K562 (cell line): ENCODE measurements at regions of chr16 and their contacts with region 1.

Region 1: DNA sequence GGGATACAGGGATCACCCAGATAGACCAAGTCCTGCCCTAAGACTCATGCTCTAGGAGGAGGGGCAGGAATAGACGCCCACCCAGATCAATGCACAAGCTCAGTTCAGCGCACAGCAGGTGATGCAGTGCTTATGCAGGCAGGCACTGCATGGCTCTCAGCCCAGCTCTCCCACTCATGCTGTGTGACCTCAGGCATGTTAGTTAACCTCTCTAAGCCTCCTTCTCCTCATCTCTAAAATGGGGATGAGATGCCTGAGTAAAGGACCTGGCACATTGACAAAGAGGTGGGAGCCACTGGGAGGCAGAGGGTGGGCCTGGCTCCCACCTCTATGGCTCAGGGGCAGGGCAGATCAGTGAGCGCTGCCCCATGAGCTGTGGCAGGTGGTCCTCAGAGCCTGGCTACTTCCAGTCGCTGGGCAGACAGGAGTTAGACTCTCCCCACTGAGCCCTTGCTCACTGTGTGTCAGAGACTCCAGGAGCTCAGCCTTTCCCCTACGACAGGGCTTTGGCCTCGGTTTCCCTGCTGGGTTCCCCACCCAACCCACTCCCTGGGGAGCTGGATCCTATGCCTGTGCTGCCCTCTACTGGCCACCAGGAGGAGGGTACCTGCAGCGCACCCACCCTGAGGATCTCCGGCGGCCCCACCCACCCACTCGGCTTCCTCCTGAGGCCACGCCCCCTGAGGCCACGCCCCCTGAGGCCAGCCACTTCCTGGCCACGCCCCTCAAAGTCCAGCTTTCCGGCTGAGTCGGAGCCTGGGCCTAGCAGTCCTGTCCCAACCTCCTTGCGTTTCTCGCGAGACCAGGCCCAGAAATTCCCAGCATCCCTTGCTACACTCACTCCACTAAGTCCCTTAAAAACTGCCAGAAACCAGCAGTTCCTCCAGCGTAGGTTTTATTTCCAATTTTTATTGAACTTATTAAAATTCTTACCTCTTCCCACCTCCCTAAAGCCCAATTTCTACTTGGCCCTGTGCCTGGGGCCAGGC is 196.1 kb downstream of the GSG1L start:
- DNase-seq: peak; percentile 93 to 99 (median 98)
- ATAC-seq: peak; percentile 100
- H3K4me3 ChIP-seq: no peak overlapping the region
- H3K27ac ChIP-seq: peak overlapping the region; percentile 59; the same call in 2 of the 3 replicates
- H3K4me1 ChIP-seq: peaks cover 0 to 2% of the 10 kb centered on the region in 2 experiments; a peak in 1 of 5 replicates
- H3K27me3 ChIP-seq: 0 out of 5 replicates have a peak, but pooled peaks cover 0 to 3% of the 10 kb centered on the region in 2 experiments
- CTCF ChIP-seq: peak; percentile 70 to 89 (median 79)
- EP300 ChIP-seq: no peak
- POLR2A ChIP-seq: no peak
- RAD21 ChIP-seq: peak; percentile 12 to 75; a peak in 2 of 4 replicates

Region 2: DNA sequence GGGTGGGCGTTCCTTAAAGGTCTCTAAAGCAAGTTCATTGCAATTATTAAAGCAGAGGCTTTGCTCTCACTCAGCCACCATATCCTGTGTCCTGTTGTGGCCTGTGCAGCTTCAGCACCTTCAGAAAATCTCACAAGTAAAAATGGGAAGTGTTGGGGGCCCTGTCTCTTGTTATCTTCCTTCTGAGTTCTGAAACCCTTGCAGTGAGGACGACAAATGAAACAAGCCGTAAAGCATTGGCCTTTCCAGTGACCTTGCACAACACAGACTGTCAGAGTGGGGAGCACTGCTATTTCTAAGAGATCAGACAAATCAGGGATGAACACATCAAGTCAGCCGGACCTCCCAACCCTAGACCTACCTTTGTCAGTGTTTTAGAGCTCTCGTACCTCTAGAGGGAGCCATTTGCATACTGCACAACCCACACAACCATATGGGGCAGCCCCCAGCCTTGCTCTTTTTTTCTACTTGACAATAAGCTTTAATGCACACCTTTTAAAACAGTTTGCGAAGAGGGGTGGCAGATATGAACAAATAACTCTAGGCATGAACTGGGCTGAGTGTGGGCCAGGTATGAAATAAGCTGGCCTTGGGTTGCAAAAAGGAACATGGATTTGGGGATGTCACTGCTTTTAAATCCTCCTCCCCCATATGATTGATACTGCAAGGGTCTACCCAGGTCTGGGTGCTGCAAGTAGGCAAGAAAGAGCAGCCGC is 227.7 kb before region 1 on chr16:
- CTCF ChIA-PET with region 1: interaction called, 7 read pairs
- POLR2A ChIA-PET with region 1: no interaction called
- in situ Hi-C with region 1: no loop called
- intact Hi-C with region 1: loop called (anchors 2 kb)
- DNase-seq: peak; percentile 70 to 79 (median 74)
- ATAC-seq: peak; percentile 96
- H3K4me3 ChIP-seq: no peak overlapping the region
- H3K27ac ChIP-seq: no peak overlapping the region
- H3K4me1 ChIP-seq: peaks cover 0 to 7% of the 10 kb centered on the region in 2 experiments; a peak in 2 of 5 replicates
- H3K27me3 ChIP-seq: no peaks in the 10 kb centered on the region
- CTCF ChIP-seq: peak; percentile 69 to 77 (median 74)
- EP300 ChIP-seq: no peak
- POLR2A ChIP-seq: no peak
- RAD21 ChIP-seq: peak; percentile 29 to 62

Region 3: DNA sequence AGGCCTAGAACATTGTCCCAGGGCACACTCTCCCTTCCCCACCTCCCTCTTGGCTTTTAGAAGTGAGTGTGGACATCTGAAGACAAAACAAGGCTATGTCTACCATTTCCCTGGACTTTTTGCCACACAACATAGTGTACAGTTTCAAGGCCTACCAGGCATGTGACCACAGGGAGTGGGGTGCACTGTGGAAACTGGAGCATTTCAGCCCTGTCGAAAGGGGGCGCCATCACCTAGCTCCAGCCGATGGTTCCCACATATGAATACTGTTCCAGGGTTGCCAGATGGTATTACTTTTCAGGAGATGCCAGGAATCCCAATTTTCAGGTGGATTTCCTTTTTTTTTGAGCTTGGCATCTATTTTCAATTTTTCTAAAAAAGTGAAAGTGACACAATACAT is 176.8 kb before region 1 on chr16:
- CTCF ChIA-PET with region 1: interaction called, 3 read pairs
- POLR2A ChIA-PET with region 1: no interaction called
- in situ Hi-C with region 1: loop called (anchors 5 kb)
- intact Hi-C with region 1: loop called (anchors 2 kb)
- DNase-seq: peak; percentile 65 to 73 (median 71)
- ATAC-seq: peak; percentile 97
- H3K4me3 ChIP-seq: no peak overlapping the region
- H3K27ac ChIP-seq: no peak overlapping the region
- H3K4me1 ChIP-seq: no peaks in the 10 kb centered on the region
- H3K27me3 ChIP-seq: no peaks in the 10 kb centered on the region
- CTCF ChIP-seq: peak; percentile 80 to 94 (median 84)
- EP300 ChIP-seq: no peak
- POLR2A ChIP-seq: no peak
- RAD21 ChIP-seq: peak; percentile 39 to 68

Region 4: GRCh38 chr16:27779641-27780164 is 87.7 kb before region 1 on chr16:
- CTCF ChIA-PET with region 1: no interaction called
- POLR2A ChIA-PET with region 1: no interaction called
- in situ Hi-C with region 1: no loop called
- intact Hi-C with region 1: loop called (anchors 2 kb)
- DNase-seq: peak; percentile 64 to 78 (median 75)
- ATAC-seq: peak; percentile 87
- H3K4me3 ChIP-seq: no peak overlapping the region
- H3K27ac ChIP-seq: no peak overlapping the region
- H3K4me1 ChIP-seq: peaks cover 0 to 16% of the 10 kb centered on the region in 2 experiments; a peak in 2 of 5 replicates
- H3K27me3 ChIP-seq: peaks cover 9 to 58% of the 10 kb centered on the region in 2 experiments; a peak in 4 of 5 replicates
- CTCF ChIP-seq: peak; percentile 68 to 72 (median 71)
- EP300 ChIP-seq: no peak
- POLR2A ChIP-seq: no peak
- RAD21 ChIP-seq: peak in 1 of 2 experiments; percentile 62; a peak in 2 of 4 replicates